H1 (cell line): ENCODE measurements at regions of chr16 and their contacts with region 1.

Region 1: DNA sequence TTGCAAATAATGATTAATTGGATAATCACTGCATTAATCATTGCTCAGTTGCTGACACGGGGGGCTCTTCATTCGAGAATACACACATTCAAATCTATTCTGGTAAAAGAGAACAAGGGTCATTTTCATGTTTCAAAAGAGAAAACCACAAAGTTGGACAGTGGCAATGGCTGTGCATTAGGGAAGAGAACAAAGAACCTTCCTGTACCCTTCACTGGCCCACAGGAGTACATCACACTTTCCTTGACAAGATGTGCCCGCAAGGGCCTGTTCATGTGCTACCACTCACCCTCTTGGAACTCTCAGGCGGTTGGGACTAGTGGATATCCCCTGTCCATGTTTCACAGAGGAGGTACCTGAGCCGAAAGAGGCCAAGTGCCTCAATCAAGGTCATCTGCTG is 223.2 kb downstream of the ZFHX3 start:
- DNase-seq: no peak
- H3K4me3 ChIP-seq: no peak overlapping the region
- H3K27ac ChIP-seq: no peak overlapping the region
- H3K4me1 ChIP-seq: no peaks in the 10 kb centered on the region
- H3K27me3 ChIP-seq: no peaks in the 10 kb centered on the region
- CTCF ChIP-seq: no peak
- EP300 ChIP-seq: no peak
- POLR2A ChIP-seq: no peak
- RAD21 ChIP-seq: no peak

Region 2: GRCh38 chr16:72723781-72724180 is 101.0 kb before region 1 on chr16:
- CTCF ChIA-PET with region 1: no interaction called
- POLR2A ChIA-PET with region 1: no interaction called
- DNase-seq: no peak
- H3K4me3 ChIP-seq: no peak overlapping the region
- H3K27ac ChIP-seq: no peak overlapping the region
- H3K4me1 ChIP-seq: peaks cover 0 to 11% (median 5%) of the 10 kb centered on the region in 4 experiments; a peak in 6 of 7 replicates
- H3K27me3 ChIP-seq: no peaks in the 10 kb centered on the region
- CTCF ChIP-seq: no peak
- EP300 ChIP-seq: no peak
- POLR2A ChIP-seq: no peak
- RAD21 ChIP-seq: no peak

Region 3: GRCh38 chr16:72753881-72754280 is 70.9 kb before region 1 on chr16:
- CTCF ChIA-PET with region 1: no interaction called
- POLR2A ChIA-PET with region 1: no interaction called
- DNase-seq: no peak
- H3K4me3 ChIP-seq: no peak overlapping the region
- H3K27ac ChIP-seq: no peak overlapping the region
- H3K4me1 ChIP-seq: no peaks in the 10 kb centered on the region
- H3K27me3 ChIP-seq: no peaks in the 10 kb centered on the region
- CTCF ChIP-seq: no peak
- EP300 ChIP-seq: no peak
- POLR2A ChIP-seq: no peak
- RAD21 ChIP-seq: no peak

Region 4: GRCh38 chr16:72840631-72841381 is 16.0 kb after region 1 on chr16:
- CTCF ChIA-PET with region 1: interaction called, 12 read pairs
- POLR2A ChIA-PET with region 1: interaction called, 3 read pairs
- DNase-seq: no peak
- H3K4me3 ChIP-seq: no peak overlapping the region
- H3K27ac ChIP-seq: no peak overlapping the region
- H3K4me1 ChIP-seq: peaks cover 0 to 3% (median 0%) of the 10 kb centered on the region in 4 experiments; a peak in 1 of 7 replicates
- H3K27me3 ChIP-seq: no peaks in the 10 kb centered on the region
- CTCF ChIP-seq: no peak
- EP300 ChIP-seq: no peak
- POLR2A ChIP-seq: no peak
- RAD21 ChIP-seq: no peak